Body of pancreas (tissue), 4 donors: ENCODE measurements at regions of chr5 and their contacts with region 1.

Region 1: DNA sequence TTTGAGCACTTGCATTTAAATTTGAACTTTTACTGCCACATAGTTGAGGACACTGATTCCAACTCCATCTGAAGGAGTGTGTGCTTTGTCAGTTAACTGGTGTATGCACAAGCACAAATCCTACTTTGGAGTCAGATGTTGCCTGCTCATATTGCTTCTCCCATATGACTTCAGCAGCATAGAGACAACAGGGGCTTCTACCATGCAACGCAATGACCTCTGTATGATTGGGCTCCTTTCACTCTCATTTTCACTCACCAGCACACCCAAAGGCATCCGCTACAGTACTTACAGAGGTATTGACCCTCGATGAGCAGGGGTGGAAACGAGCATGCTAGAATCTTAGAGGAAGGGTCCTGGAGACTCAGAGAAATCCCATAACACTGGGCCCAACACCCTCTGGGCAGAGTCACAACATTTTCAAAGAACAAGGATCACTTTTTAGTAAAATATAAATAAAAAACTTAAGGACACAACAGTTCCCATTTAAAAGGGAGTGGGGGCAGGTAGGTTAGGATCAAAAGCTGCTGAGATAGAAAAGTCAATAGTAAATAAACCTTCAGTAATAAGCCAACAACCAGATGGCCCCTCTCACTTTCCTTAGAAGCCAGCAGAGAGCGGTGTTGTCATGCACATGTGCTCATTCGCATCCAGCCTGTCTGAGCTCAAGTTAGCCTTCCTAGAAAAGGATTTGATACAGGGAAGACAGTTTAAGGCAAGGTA is 203.8 kb downstream of the SNCAIP start:
- DNase-seq: peak; percentile 46 to 61 (median 54)
- ATAC-seq: peak; percentile 68
- H3K4me3 ChIP-seq: no peak overlapping the region
- H3K27ac ChIP-seq: no peak overlapping the region
- H3K4me1 ChIP-seq: no peaks in the 10 kb centered on the region
- H3K27me3 ChIP-seq: no peaks in the 10 kb centered on the region
- CTCF ChIP-seq: peak; percentile 31 to 75 (median 64)
- POLR2A ChIP-seq: no peak

Region 2: GRCh38 chr5:122723606-122724352 is 207.9 kb after region 1 on chr5:
- intact Hi-C with region 1: no loop called
- DNase-seq: no peak
- ATAC-seq: no peak
- H3K4me3 ChIP-seq: no peak overlapping the region
- H3K27ac ChIP-seq: no peak overlapping the region
- H3K4me1 ChIP-seq: no peaks in the 10 kb centered on the region
- H3K27me3 ChIP-seq: no peaks in the 10 kb centered on the region
- CTCF ChIP-seq: no peak
- POLR2A ChIP-seq: no peak

Region 3: GRCh38 chr5:123610665-123611405 is 1095.0 kb after region 1 on chr5:
- intact Hi-C with region 1: loop called (anchors 10 kb)
- DNase-seq: peak in 1 of 4 donors; percentile 46
- ATAC-seq: peak; percentile 73
- H3K4me3 ChIP-seq: no peak overlapping the region
- H3K27ac ChIP-seq: no peak overlapping the region
- H3K4me1 ChIP-seq: no peaks in the 10 kb centered on the region
- H3K27me3 ChIP-seq: no peaks in the 10 kb centered on the region
- CTCF ChIP-seq: peak; percentile 87 to 97 (median 94)
- POLR2A ChIP-seq: no peak